Posterior cingulate gyrus (tissue), 11 donors: ENCODE measurements at regions of chr18 and their contacts with region 1.

Region 1: DNA sequence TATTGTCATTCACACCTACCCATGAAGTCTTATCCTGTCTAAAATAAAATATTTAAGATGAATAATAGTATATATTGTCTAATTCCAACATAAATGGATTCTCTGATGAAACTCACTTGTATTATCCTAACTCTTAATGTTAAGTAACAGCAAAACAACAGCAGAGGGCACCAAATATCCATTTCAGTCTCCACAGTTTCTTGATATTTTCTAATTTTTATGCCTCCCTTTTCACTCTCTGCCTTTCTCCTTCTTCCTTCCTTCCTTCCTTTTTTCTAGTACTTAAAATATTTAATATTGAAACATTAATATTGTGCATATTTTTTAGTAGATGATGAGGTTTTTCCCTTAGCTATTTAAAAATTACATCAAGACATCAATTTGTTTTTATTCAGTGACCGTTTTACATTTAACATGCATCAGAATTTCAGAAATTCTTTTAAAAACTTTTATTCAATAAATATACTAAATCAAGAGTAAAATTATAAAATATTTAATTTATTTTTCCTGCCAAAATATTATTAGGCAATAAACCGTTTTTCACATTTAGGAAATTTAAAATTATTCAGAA is 97.6 kb downstream of the WDR7 start:
- DNase-seq: no peak

Region 2: GRCh38 chr18:56787390-56787789 is 38.6 kb after region 1 on chr18:
- intact Hi-C with region 1: no loop called
- DNase-seq: no peak

Region 3: DNA sequence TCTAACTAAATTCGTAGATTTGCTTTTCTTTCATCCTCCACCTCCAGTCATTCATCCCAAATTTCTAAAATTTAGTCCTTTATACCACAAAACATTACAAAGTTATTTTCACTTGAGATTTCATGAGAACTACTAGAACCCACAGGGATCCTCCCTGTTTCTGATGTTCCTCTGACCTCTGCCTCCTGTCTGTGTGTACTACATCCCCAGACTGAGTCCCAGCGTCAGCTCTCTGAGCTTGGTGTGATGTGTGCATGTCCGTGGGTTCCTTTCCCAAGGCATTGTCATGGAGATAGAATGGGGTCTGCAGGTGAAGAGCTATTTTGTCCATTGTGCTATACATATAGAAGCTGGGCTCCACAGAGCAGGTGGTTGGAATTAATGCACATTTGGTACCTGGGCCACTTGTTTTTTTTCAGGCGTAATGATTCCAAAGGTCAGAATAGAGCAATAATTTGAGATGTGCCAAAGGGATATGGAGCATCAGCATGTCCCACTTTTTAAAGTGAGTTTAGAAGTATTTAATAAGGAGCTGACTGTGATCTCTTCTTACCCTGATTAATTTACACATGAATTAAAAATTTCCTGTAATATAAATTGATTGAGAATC is 246.9 kb after region 1 on chr18:
- intact Hi-C with region 1: loop called (anchors 2 kb)
- DNase-seq: peak in 2 of 10 donors; percentile 28 to 54

Region 4: GRCh38 chr18:57434536-57435494 is 686.0 kb after region 1 on chr18 and contains the start of gene ONECUT2:
- intact Hi-C with region 1: loop called (anchors 10 kb)
- DNase-seq: peak; percentile 77 to 98 (median 86)

Region 5: GRCh38 chr18:57561728-57562423 is 813.1 kb after region 1 on chr18:
- intact Hi-C with region 1: loop called (anchors 1 kb)
- DNase-seq: no peak